GM18951 (cell line): ENCODE measurements at regions of chr20 and their contacts with region 1.

Region 1: DNA sequence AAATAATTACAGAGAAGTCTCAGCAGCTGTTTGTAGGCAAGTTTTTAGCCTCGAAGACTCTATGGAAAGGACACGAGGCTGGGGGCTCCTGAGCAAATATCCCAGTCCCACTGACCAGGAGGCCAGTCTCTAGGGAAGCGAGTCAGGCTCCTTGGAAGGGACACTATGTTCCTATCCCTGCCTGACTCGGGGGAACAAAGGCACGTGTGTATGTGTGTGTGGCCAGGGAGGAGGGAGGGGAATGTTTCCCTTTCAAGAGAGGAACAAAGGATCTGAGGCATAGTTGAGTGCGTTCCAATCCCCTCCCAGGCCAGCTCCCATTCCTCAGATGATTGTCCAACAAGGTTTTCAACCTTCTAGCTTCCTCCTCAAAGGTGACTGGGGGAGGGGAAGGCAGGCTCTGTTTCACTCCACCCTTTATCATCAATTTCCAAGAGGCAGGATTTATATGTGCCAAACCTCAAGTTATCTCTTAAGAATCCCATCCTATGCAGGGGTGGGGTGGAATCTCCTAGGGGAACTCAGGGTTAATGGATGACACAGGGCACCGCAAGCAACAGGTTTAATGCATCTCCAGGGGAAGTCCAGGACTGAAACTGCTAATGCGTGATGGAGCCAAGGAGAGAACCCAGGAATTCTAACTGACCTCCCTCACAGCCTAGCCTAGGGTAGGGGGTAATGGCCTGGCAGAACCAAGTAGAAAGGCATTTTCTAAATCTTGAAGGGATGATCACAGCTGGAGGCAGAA is 9.9 kb downstream of the BCL2L1 start:
- POLR2A ChIP-seq: no peak

Region 2: DNA sequence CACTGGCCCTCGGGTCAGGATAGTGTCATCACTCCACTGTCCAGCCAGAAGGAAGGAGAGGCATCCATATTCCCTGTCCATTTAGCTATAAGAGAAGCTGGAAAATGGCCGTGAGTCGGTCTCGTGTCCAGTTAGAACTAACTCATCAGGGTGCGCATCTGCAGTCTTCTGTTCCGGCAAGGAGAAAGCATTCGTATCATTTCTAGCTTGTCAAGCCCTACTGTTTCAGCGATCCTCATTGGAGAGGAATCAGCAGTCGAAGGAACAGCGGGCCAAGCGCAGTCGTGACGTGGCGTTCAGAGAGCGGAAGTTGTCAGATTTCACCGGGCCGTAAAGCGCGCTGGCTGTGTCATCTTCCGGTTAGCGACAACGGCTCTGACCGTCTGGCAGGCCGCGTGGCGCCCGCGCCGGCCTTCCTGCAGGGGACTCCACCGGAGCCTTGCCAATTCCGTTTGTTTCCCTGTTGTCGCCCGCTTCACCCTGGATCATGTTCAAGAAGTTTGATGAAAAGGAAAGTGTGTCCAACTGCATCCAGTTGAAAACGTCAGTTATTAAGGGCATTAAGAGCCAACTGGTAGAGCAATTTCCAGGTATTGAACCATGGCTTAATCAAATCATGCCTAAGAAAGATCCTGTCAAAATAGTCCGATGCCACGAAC is 165.6 kb before region 1 on chr20:
- in situ Hi-C with region 1: no loop called
- POLR2A ChIP-seq: peak; percentile 79

Region 3: DNA sequence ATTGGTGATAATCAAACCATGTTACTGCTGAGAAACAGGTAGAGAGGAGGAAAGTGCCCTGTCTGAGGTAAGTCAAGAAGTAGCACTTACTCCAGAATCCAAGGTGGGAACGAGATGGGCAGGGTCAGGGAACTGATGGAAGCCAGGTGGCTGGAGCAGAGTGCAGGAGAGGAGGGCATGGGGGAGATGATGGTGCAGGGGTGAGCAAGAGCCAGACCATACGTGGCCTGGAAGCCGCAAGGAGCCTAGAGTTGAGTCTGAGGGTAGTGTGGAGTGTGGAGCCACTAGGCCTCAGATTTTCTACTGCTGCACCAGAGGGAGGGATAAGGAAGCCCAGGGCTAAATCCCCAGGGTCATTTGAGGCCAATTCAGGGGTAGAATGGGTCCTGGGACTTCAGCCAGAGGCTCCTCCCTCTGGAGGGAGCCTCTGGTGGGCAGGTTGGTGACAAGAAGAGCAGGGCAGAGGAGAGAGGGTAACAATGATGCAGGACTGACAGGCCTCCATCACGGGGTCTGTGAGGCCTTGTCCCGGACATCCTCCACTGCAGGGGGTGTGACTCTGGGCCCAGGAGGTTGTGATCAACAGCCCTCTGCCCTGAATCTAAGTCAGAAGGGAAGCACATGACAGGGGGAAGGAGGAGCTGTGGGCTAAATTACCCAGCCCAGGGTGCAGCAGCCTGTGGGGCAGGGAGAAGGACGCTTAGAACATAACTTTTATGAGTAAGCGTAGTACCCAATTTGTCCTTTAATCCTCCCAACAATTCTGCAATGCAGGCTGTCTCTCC is 46.3 kb before region 1 on chr20:
- in situ Hi-C with region 1: loop called (anchors 5 kb)
- POLR2A ChIP-seq: no peak

Region 4: DNA sequence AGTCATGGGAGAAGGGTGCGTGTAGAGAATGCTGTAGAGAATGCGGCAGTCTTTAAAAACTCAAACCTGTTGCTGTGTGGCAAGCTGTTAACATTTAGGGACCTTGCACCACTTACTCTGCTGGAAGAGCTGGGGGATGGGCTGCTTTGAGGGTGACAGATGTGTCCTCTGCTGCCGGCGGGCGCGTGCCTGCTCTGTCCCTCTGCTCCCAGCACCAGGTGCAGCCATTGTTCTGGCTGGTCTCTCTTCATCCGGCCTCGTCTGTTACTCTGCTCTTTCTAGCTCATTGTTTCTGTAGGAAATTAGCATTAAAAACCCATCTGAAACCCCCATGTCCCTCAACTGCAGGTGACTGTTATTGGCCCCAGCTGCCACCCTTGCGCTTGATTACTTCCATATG is 1855.6 kb after region 1 on chr20:
- in situ Hi-C with region 1: no loop called
- POLR2A ChIP-seq: no peak